Activated CD8-positive, alpha-beta T cell treated with anti-CD3 and anti-CD28 coated beads, Interleukin-2, amount 10 ng/mL, durations not matched to agents 7 days and 5 days (primary cell): ENCODE measurements at regions of chr20 and their contacts with region 1.

Region 1: GRCh38 chr20:62907384-62908317 is 18.7 kb downstream of the DIDO1 start:
- DNase-seq: peak; percentile 52
- ATAC-seq: peak; percentile 74
- H3K4me3 Mint-ChIP-seq: no peak overlapping the region
- H3K27ac Mint-ChIP-seq: no peak overlapping the region
- H3K4me1 Mint-ChIP-seq: peaks cover 41% of the 10 kb centered on the region
- H3K27me3 Mint-ChIP-seq: no peaks in the 10 kb centered on the region

Region 2: GRCh38 chr20:62893700-62894099 is 14.0 kb before region 1 on chr20:
- CTCF ChIA-PET with region 1: interaction called, 14 read pairs
- POLR2A ChIA-PET with region 1: interaction called, 3 read pairs
- DNase-seq: no peak
- ATAC-seq: no peak
- H3K4me3 Mint-ChIP-seq: no peak overlapping the region
- H3K27ac Mint-ChIP-seq: no peak overlapping the region
- H3K4me1 Mint-ChIP-seq: peaks cover 48% of the 10 kb centered on the region
- H3K27me3 Mint-ChIP-seq: no peaks in the 10 kb centered on the region

Region 3: DNA sequence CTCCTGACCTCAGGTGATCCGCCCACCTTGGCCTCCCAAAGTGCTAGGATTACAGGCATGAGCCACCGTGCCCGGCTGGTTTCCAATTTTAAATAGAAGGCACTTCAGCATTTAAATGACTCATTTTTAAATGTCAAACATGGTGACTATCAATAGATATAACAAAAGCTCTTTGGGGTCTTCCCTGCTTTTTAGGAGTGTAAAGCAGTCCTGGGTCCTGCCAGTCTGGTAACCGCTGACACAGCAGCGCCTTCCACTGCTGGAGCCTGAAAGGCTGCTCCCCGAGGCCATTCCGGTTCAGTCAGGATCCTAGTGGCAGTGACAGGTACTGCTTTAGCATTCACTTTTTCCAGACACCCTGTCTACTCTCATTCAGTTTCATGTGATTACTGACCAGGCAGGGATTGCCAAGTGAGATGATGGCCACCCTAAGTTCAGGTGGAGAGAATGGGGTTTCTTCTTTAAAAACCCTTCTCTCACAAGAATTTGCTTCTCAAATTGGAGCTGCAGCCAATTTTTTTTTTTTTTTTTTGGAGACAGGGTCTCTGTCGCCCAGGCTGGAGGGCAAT is 13.6 kb after region 1 on chr20:
- CTCF ChIA-PET with region 1: interaction called, 182 read pairs
- POLR2A ChIA-PET with region 1: interaction called, 9 read pairs
- DNase-seq: peak; percentile 82
- ATAC-seq: peak; percentile 57
- H3K4me3 Mint-ChIP-seq: peak overlapping the region; percentile 65
- H3K27ac Mint-ChIP-seq: peak overlapping the region; percentile 81
- H3K4me1 Mint-ChIP-seq: peaks cover 81% of the 10 kb centered on the region
- H3K27me3 Mint-ChIP-seq: no peaks in the 10 kb centered on the region

Region 4: DNA sequence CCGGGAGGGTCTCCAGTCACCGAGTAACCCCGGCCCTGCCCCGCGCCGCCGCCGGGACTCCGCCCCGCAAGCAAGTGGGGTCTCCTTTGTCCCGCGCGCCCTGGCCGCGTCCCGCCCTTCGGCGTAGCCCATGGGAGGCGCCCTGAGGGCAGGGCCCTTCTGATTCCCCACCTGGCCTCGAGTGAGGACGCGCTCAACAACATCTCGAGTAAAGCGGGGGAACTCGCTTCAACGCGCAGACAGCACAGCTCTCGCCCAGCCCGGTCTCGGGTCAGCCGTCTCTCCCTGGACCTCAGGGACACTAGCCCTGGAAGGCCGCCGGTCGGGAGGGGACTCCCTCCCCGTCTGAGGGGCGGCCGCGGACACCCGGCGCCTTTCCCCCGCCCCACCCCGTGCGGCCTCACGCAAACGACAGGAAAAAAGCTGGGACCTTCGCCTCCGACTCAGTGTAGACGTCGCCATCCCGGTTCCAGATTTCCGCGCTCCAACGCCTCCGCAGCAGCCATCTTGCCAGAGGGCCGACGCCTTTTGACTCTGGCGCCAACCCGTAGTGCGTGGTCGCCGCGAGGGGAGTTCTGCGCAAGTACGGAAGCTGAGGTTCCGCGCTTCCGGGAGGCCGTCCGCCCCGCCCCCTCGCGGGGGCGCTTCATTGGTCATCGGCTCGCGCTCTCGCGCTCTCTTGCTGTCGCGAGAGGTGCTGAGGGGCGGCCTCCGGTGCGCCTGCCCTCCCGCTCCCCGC is 29.9 kb after region 1 on chr20:
- CTCF ChIA-PET with region 1: interaction called, 12 read pairs
- POLR2A ChIA-PET with region 1: interaction called, 3 read pairs
- DNase-seq: peak; percentile 97
- ATAC-seq: peak; percentile 90
- H3K4me3 Mint-ChIP-seq: no peak overlapping the region
- H3K27ac Mint-ChIP-seq: peak overlapping the region; percentile 95
- H3K4me1 Mint-ChIP-seq: peaks cover 37% of the 10 kb centered on the region
- H3K27me3 Mint-ChIP-seq: no peaks in the 10 kb centered on the region

Region 5: DNA sequence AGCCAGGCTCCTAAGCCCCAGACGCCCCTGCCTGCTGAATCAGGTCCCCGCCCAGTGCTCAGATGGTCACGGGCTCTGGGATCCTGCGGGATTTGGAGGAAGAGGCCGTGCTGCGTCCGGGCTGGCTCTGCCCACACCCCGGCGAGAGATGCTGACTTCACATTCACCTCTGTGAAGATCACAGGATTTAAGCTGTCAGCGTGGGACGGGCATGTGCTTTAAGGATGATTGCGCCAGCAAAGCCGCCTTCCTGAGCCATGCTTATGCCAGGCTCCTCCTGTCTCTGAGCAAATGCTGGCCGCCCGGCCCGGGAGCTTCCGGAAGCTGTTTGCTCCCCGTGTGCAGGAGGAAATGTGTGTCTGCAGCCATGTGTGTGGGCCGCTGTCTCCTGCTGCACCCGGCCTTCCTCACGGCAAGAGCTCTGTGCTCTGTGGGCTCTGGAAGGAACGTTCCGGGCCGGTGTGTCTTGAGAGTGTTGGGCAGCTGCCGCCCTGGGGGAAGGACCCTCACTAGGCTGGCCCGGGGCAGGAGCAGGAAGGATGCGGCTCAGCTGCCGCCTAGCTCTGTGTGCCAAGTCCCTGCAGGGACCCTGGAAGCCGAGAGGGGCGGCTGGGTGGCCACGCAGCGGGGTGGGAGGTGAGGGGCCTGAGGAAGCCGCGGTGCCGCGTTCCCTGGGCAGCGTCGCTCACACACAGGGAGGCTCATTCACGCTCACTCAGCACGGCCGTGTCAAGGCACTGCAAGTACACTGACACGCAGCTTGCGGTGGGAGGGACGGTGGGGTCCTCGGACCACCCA is 118.1 kb after region 1 on chr20:
- CTCF ChIA-PET with region 1: no interaction called
- POLR2A ChIA-PET with region 1: no interaction called
- DNase-seq: peak; percentile 42
- ATAC-seq: peak; percentile 46
- H3K4me3 Mint-ChIP-seq: peak overlapping the region; percentile 8
- H3K27ac Mint-ChIP-seq: peak overlapping the region; percentile 55
- H3K4me1 Mint-ChIP-seq: peaks cover 15% of the 10 kb centered on the region
- H3K27me3 Mint-ChIP-seq: peaks cover 10% of the 10 kb centered on the region